ENCODE measurements at regions of chr1 and their contacts with region 1.

Region 1: DNA sequence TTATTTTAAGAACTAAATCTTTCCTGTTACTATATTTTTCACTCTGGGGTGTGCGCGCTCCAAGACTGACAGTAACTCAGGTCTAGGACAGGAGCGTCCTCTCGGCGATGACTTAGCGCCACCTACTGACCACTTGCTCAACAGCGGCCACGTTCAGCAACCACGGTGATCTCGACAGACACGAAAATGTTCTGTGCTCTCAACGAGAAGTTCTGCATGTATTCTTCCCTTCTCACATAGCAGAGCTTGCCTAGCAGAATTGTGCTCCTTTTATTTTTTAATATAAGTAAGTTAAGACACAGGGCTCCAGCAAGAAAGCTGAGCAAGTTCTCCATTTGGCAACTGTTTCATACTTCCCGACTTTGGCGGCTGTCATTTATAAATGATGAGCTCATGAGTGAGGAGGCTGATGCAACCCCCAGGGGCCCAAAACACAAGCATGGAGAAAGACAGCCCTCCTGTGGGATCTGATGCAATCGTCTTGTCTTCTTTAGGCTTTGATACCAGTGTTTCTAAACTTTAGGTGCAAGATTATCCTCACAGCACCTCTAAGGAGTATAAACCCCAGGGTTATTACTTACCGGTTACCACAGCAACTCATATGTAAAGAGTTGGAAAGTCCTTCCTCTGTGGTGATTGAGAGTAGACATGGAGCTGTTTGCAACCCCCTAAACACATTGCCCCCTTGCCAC is 92.6 kb downstream of the HHIPL2 start:
- DNase-seq: peak; percentile 83
- ATAC-seq: peak; percentile 97
- H3K4me3 ChIP-seq: no peak overlapping the region
- H3K4me3 Mint-ChIP-seq: peak overlapping the region; percentile 1
- H3K27ac ChIP-seq: no peak overlapping the region
- H3K27ac Mint-ChIP-seq: no peak overlapping the region
- H3K4me1 ChIP-seq: peaks cover 3 to 11% of the 10 kb centered on the region in 2 donors
- H3K4me1 Mint-ChIP-seq: peaks cover 5% of the 10 kb centered on the region
- H3K27me3 ChIP-seq: peaks cover 0 to 6% (median 0%) of the 10 kb centered on the region in 4 experiments
- H3K27me3 Mint-ChIP-seq: peaks cover 6% of the 10 kb centered on the region
- CTCF ChIP-seq: peak; percentile 97

Region 2: GRCh38 chr1:220810179-220810653 is 1645.1 kb before region 1 on chr1:
- CTCF ChIA-PET with region 1: interaction called, 11 read pairs
- POLR2A ChIA-PET with region 1: no interaction called
- intact Hi-C with region 1: loop called (anchors 2 kb)
- DNase-seq: peak; percentile 83
- ATAC-seq: peak; percentile 98
- H3K4me3 ChIP-seq: peak overlapping the region in 1 of 5 experiments; percentile 13
- H3K4me3 Mint-ChIP-seq: peak overlapping the region; percentile 70
- H3K27ac ChIP-seq: no peak overlapping the region
- H3K27ac Mint-ChIP-seq: no peak overlapping the region
- H3K4me1 ChIP-seq: peaks cover 0 to 5% of the 10 kb centered on the region in 2 donors
- H3K4me1 Mint-ChIP-seq: peaks cover 6% of the 10 kb centered on the region
- H3K27me3 ChIP-seq: peaks cover 0 to 9% (median 2%) of the 10 kb centered on the region in 4 experiments
- H3K27me3 Mint-ChIP-seq: peaks cover 7% of the 10 kb centered on the region
- CTCF ChIP-seq: peak; percentile 99

Region 3: DNA sequence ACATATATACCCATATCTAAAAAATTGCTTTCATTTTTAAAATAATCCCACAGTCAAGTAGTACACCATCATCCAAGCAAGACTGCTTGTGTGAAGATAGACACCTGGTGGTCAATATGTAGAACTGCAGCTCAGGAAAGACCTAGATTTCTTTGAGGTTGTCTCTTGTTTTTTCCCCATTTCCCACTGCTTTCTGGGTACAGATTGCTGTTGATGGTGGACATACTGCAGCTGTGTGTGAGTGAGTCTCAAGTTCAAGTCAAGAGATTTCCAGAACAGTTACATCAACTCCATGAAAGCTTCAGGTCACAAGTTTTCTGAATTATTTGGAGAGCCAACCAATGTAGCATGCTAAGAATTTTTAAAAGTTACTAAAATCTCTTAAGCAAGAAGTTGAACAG is 1019.8 kb before region 1 on chr1:
- CTCF ChIA-PET with region 1: interaction called, 14 read pairs
- POLR2A ChIA-PET with region 1: no interaction called
- intact Hi-C with region 1: no loop called
- DNase-seq: peak; percentile 62
- ATAC-seq: peak; percentile 56
- H3K4me3 ChIP-seq: no peak overlapping the region
- H3K4me3 Mint-ChIP-seq: no peak overlapping the region
- H3K27ac ChIP-seq: no peak overlapping the region
- H3K27ac Mint-ChIP-seq: no peak overlapping the region
- H3K4me1 ChIP-seq: peaks cover 10 to 11% of the 10 kb centered on the region in 2 donors
- H3K4me1 Mint-ChIP-seq: peaks cover 18% of the 10 kb centered on the region
- H3K27me3 ChIP-seq: no peaks in the 10 kb centered on the region
- H3K27me3 Mint-ChIP-seq: peaks cover 9% of the 10 kb centered on the region
- CTCF ChIP-seq: peak; percentile 96

Region 4: DNA sequence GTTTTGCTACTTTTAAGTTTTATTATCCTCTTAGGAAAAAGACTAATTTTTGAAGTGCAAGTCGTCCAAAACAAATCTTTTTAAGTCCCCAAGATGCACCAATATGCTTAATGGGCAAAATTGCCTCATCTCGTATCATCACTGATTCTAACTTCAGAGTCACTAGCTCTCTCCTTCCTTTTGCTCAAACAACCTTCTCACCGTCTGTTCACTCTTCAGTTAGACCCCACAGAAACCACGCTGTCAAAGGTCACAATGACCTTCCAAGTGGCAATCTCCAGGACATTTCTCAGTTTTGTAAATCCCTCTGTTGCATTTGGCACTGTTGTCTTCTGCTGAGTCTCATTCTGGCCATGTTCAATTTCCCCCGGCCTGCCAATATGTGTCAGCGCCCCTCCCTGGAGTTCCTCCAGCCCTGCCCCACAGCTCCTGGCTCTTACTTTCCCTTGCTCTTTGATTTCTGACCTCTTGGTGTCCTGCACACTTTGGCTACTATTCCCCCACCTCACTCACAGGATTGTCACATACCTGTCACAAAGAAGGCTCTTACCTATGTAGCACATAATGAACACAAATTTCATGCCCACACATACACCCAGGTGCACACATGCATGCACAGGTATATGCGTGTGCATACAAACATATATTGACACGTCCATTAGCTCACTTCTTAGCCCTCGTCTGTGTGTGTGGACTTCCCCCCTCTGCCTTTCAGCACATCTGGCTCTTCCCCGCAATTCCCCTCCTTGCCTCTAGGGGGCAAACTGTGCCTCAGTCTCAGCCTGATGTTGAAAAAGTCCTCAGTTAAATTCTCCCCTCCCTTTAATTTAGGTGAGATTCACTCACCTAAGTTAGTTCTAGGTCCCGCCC is 359.5 kb before region 1 on chr1:
- CTCF ChIA-PET with region 1: interaction called, 23 read pairs
- POLR2A ChIA-PET with region 1: no interaction called
- intact Hi-C with region 1: no loop called
- DNase-seq: peak; percentile 64
- ATAC-seq: peak; percentile 71
- H3K4me3 ChIP-seq: no peak overlapping the region
- H3K4me3 Mint-ChIP-seq: no peak overlapping the region
- H3K27ac ChIP-seq: no peak overlapping the region
- H3K27ac Mint-ChIP-seq: no peak overlapping the region
- H3K4me1 ChIP-seq: no peaks in the 10 kb centered on the region
- H3K4me1 Mint-ChIP-seq: no peaks in the 10 kb centered on the region
- H3K27me3 ChIP-seq: no peaks in the 10 kb centered on the region
- H3K27me3 Mint-ChIP-seq: peaks cover 11% of the 10 kb centered on the region
- CTCF ChIP-seq: peak; percentile 96

Region 5: DNA sequence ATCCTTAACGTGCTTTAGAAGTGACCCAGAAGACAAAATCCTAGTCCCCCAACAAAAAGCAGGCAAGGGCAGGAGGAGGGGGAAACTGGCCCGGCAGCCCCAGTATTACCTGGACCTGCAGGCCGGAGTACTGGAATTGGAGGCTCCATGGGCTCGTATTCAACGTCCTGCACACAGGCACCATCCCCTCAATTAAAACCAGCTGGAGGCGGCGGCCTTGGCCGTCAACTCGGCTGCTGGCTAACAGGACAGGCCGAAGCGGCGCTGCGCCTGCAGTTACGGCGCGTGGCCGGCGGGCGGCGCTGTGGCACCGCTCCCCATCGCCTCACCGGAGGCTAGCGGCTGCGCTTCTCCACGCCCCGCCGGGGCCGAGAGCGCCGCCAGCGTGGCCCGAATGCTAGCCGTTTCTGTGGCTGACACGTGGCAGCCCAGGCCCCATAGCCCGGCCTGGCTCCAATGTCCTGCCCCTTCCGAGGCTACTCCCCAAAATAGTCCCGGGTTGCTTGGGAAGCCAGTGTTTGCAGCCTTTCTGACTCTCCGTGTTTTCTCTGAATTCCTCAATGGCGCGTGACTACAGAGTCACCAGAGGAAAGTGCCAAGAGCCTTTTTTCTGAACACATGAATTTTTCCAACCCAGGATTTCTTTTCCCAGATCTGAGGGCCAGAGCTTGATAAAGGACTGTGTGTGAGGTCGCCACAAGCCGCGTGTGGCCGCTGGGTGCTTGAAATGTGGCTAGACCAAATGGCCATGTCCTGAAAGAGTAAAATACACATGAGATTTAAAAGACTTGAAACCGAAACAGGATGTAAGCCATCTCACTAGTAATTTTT is 10.1 kb after region 1 on chr1:
- CTCF ChIA-PET with region 1: interaction called, 45 read pairs
- POLR2A ChIA-PET with region 1: no interaction called
- intact Hi-C with region 1: no loop called
- DNase-seq: peak; percentile 92
- ATAC-seq: peak; percentile 95
- H3K4me3 ChIP-seq: peak overlapping the region; percentile 36 to 82 (median 72)
- H3K4me3 Mint-ChIP-seq: peak overlapping the region; percentile 92
- H3K27ac ChIP-seq: peak overlapping the region; percentile 77 to 84
- H3K27ac Mint-ChIP-seq: peak overlapping the region; percentile 96
- H3K4me1 ChIP-seq: peaks cover 3 to 15% of the 10 kb centered on the region in 2 donors
- H3K4me1 Mint-ChIP-seq: peaks cover 13% of the 10 kb centered on the region
- H3K27me3 ChIP-seq: peaks cover 0 to under 1% (median 0%) of the 10 kb centered on the region in 4 experiments
- H3K27me3 Mint-ChIP-seq: peaks cover 13% of the 10 kb centered on the region
- CTCF ChIP-seq: peak; percentile 100

Measured in B cell (primary cell).